Right ventricle myocardium inferior (tissue), 1 donor: ENCODE measurements at regions of chr7 and their contacts with region 1.

Region 1: DNA sequence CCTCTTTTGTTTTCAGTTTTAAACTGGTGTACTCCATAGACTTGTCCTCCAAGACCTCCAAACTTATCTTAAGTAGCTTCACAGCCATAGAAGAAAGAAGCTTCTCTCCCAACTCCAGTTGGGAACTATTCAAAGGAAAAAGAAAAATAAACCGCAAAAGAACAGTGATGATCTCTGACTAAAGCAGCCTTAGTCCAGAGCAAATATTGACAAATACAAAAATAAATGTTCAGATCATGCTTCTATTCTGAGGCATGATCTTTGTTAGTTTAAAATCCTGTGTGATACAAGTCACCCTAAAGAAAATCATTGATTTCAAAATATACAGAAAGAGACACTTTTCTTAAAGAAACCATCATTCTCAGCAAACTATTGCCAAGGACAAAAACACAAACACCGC is 373.0 kb upstream of the SMIM30 start:
- DNase-seq: no peak
- ATAC-seq: no peak

Region 2: GRCh38 chr7:113246738-113247137 is 244.6 kb before region 1 on chr7:
- intact Hi-C with region 1: no loop called
- DNase-seq: no peak
- ATAC-seq: no peak

Region 3: GRCh38 chr7:113256883-113257531 is 234.3 kb before region 1 on chr7:
- intact Hi-C with region 1: no loop called
- DNase-seq: no peak
- ATAC-seq: no peak

Region 4: GRCh38 chr7:113452245-113452644 is 39.1 kb before region 1 on chr7:
- intact Hi-C with region 1: no loop called
- DNase-seq: no peak
- ATAC-seq: no peak

Region 5: GRCh38 chr7:113710310-113711106 is 219.2 kb after region 1 on chr7:
- intact Hi-C with region 1: loop called (anchors 5 kb)
- DNase-seq: no peak
- ATAC-seq: peak; percentile 54